ENCODE measurements at regions of chr9 and their contacts with region 1.

Region 1: DNA sequence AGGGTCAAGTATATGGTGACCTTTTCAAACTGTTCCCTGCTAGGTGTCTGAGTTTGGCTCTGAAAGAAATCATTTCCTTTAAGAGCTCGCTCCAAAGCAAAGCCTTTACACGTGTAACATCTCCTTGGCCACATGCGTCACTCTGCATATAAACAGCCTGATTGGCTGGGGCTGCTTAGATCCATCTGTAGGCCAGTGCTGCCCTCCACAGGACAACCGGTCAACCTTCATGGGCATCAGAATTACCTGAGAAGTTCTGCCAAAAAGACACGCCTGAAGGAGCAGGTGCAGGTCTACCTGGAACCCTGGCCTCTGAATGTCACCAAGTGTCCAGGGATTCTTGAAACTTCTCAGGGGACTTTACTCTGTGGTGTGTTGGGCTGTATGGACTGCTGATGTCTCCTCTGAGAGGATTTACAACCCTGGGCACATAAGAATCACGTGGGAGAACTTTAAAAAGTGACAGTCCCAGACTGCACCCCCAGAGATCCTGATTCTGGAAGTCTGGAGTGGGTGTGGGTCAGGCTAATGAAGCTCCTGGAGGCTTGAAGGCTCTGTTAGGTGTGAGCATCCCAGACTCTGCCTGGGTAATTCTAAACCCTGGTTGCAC is 497.6 kb downstream of the GADD45G start:
- DNase-seq: peak; percentile 48 to 87
- H3K4me3 ChIP-seq: no peak overlapping the region
- H3K27ac ChIP-seq: no peak overlapping the region
- H3K4me1 ChIP-seq: peaks cover 0 to 3% of the 10 kb centered on the region in 2 donors
- H3K27me3 ChIP-seq: no peaks in the 10 kb centered on the region
- CTCF ChIP-seq: peak; percentile 79 to 86 (median 83)

Region 2: GRCh38 chr9:89597711-89598625 is 504.4 kb before region 1 on chr9:
- intact Hi-C with region 1: loop called (anchors 1 kb)
- DNase-seq: peak in 1 of 2 donors; percentile 71
- H3K4me3 ChIP-seq: no peak overlapping the region
- H3K27ac ChIP-seq: no peak overlapping the region
- H3K4me1 ChIP-seq: no peaks in the 10 kb centered on the region
- H3K27me3 ChIP-seq: no peaks in the 10 kb centered on the region
- CTCF ChIP-seq: peak; percentile 76 to 86 (median 79)

Region 3: GRCh38 chr9:89732295-89732938 is 370.0 kb before region 1 on chr9:
- intact Hi-C with region 1: loop called (anchors 10 kb)
- DNase-seq: no peak
- H3K4me3 ChIP-seq: no peak overlapping the region
- H3K27ac ChIP-seq: no peak overlapping the region
- H3K4me1 ChIP-seq: no peaks in the 10 kb centered on the region
- H3K27me3 ChIP-seq: no peaks in the 10 kb centered on the region
- CTCF ChIP-seq: no peak

Region 4: GRCh38 chr9:89978170-89978569 is 124.2 kb before region 1 on chr9:
- intact Hi-C with region 1: loop called (anchors 10 kb)
- DNase-seq: no peak
- H3K4me3 ChIP-seq: no peak overlapping the region
- H3K27ac ChIP-seq: no peak overlapping the region
- H3K4me1 ChIP-seq: no peaks in the 10 kb centered on the region
- H3K27me3 ChIP-seq: no peaks in the 10 kb centered on the region
- CTCF ChIP-seq: peak in 1 of 3 experiments; percentile 52

Region 5: DNA sequence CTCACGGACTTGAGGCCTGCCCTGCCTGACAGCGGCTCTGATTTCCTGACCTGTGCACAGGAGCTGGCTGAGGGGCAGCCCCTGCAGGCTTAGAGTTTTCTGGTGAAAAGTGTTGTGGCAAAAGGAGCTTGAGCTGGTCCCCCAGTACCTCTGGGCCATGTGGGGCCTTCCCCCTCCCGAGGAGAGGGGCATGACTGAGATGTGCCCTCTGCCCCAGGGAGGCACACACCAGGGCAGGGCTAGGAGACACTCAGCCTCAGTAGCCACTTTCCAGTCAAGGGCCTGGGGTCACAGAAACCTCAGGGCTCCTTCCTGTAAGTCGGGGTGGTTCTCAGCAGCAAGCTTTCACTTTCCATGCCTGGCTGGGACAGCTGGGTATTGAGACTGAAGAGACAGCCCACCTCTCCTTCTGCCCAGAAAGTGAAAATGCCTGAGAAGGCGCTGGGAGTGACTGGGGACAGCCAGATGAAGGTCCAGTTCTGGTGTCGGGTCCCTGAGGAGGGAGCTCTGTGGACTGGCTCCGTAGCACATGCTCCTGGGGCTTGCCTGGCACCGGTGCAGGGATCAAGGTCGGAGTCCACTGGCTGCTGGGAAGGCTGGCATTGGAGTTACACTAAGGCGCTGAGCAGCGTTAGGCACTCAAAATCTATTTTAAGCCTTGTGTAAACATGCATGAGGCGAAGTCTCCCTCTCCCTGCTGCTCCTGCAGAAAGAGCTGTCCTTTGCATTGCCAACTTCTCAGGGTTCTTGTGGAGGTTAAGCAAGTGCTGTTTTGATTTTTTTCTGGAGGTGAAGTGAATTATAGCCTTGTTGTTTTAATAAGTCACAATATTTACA is 102.6 kb before region 1 on chr9:
- intact Hi-C with region 1: loop called (anchors 5 kb)
- DNase-seq: peak in 1 of 2 donors; percentile 82
- H3K4me3 ChIP-seq: peak overlapping the region; percentile 43 to 61
- H3K27ac ChIP-seq: peak overlapping the region; percentile 78 to 80
- H3K4me1 ChIP-seq: peaks cover 24 to 37% of the 10 kb centered on the region in 2 donors
- H3K27me3 ChIP-seq: no peaks in the 10 kb centered on the region
- CTCF ChIP-seq: no peak